HEK293T (cell line): ENCODE measurements at regions of chr2 and their contacts with region 1.

Region 1: DNA sequence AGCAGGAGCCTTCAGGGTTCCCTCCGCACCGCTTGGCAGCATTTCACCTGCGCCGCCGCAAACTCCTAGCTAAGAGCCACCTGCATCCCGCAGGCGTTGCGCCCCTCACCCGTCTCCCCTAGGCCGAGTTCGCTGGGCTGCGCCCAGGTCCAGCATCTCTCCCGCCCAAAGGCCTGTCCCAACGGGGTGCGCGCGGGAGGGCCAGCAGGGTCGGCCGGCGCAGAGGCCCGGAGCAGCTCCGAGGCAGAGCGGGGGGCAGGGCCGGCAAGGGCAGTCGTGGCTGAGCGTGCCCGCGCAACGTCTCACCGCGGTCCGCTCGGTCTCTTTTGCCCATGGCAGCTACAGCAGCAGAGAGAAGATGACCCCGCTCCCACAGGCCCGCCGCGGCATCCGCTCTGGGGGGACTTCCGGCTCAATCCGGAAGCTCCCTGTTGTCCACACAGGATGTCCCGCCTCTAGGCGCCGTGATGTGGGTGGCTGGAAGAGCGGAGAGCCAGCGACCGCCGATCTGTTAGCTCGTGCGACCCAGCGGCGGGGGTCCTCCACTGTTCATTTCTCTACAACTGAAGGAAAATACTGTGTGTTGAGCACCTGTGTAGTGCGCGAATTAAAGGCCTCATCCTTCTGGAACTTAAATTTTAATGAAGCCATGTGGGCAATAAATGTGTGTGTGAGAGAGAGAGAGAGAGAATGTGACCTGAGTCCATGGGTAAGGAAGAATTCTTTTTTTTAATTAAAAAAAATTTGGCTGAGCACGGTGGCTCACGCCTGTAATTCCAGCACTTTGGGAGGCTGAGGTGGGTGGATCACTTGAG is at the start of gene ERCC3:
- DNase-seq: peak; percentile 94

Region 2: GRCh38 chr2:127197475-127198385 is 96.2 kb before region 1 on chr2:
- CTCF ChIA-PET with region 1: interaction called, 7 read pairs
- POLR2A ChIA-PET with region 1: interaction called, 10 read pairs
- DNase-seq: peak; percentile 80

Region 3: DNA sequence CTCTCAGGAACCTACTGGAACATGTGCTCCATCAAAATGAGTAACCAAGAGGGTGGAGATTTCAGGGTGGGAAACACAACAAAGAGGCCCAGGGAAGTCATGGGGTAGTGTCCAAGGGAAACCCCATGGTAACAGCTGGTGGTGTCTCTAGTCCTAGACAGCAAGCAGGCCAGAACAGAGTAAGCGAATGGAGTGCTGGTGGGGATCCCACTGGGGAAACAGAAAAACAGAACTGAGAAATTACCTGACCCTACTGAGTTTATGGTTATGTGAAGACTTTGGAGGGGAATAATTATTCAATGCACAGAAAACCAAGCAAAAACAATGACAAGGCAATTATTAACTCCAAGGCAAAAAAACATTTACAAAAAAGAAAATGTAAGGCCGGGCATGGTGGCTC is 16.9 kb before region 1 on chr2:
- CTCF ChIA-PET with region 1: no interaction called
- POLR2A ChIA-PET with region 1: interaction called, 15 read pairs
- DNase-seq: no peak